Activated CD4-positive, alpha-beta T cell treated with anti-CD3 and anti-CD28 coated beads for 36 hours (primary cell): ENCODE measurements at regions of chr1 and their contacts with region 1.

Region 1: GRCh38 chr1:42462828-42463763 is at the start of gene CCDC30:
- DNase-seq: peak; percentile 97
- ATAC-seq: peak; percentile 100
- H3K4me3 Mint-ChIP-seq: peak within 1 kb of the TSS; percentile 77
- H3K27ac Mint-ChIP-seq: peak within 1 kb of the TSS; percentile 73
- H3K4me1 Mint-ChIP-seq: peaks cover 31% of the 10 kb centered on the region
- H3K27me3 Mint-ChIP-seq: no peaks in the 10 kb centered on the region
- total RNA-seq, gene CCDC30: 1.3 to 2.3 TPM

Region 2: DNA sequence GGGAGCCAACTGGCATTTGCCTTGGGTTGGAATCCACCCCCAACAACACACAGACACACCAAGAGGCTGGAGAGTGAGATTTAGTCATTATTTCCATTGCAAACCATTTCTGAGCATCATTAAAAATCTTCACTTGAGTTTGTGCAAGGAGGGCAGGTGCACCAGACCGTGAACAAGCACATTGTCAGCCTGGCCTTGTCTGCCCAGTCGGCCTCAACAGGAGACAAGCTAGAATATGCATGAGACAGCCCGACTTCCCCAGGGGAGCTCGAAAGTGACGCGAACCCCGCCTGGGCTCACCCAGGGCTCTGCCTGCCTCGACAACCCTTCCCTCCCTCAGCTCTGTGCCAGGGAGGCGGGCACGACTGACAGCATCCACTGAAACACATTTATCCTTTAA is 325.3 kb before region 1 on chr1:
- CTCF ChIA-PET with region 1: no interaction called
- POLR2A ChIA-PET with region 1: no interaction called
- intact Hi-C with region 1: no loop called
- DNase-seq: no peak
- ATAC-seq: no peak
- H3K4me3 Mint-ChIP-seq: no peak overlapping the region
- H3K27ac Mint-ChIP-seq: no peak overlapping the region
- H3K4me1 Mint-ChIP-seq: no peaks in the 10 kb centered on the region
- H3K27me3 Mint-ChIP-seq: peaks cover 4% of the 10 kb centered on the region

Region 3: GRCh38 chr1:42657971-42658879 is 195.1 kb after region 1 on chr1 and contains the start of gene PPIH:
- CTCF ChIA-PET with region 1: no interaction called
- POLR2A ChIA-PET with region 1: no interaction called
- intact Hi-C with region 1: loop called (anchors 1 kb)
- DNase-seq: peak; percentile 98
- ATAC-seq: peak; percentile 97
- H3K4me3 Mint-ChIP-seq: peak within 1 kb of the TSS; percentile 97
- H3K27ac Mint-ChIP-seq: peak within 1 kb of the TSS; percentile 97
- H3K4me1 Mint-ChIP-seq: peaks cover 39% of the 10 kb centered on the region
- H3K27me3 Mint-ChIP-seq: no peaks in the 10 kb centered on the region
- total RNA-seq, gene PPIH: 111 to 114 TPM

Region 4: DNA sequence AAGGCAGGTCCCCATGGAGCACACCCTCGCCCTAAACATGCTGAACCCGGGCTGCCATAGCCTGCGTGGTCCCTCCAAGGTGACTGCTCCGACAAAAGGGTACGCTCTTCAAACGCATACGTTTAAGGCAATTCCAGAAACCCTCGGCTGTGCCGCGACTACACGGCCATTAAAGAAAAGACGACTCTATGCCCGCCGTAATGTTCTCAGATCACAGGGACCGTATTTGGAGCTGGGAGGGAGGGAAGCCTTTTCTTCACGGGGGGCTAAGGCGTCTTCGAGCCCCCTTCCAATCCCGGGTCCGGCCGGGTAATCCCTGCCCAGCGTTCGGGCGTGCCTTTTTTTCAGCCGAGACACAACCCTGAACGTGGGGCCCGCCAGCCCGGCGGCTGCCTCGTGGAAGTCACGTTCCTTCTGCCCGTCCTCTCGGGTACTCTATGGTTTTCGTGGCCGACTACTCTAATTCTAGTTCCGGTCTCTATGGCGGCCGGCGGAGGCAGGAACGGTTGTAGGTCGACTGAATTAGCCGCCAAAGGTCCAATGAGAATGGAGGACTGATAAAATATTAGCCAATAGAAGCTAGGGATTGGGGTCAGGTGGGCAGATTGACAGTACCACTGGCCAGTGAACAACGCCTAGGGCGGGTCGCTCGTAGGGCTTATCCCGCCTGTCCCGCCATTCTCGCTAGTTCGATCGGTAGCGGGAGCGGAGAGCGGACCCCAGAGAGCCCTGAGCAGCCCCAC is 218.8 kb after region 1 on chr1 and contains the start of gene YBX1:
- CTCF ChIA-PET with region 1: no interaction called
- POLR2A ChIA-PET with region 1: no interaction called
- intact Hi-C with region 1: loop called in 1 of 2 experiments (anchors 1 kb)
- DNase-seq: peak; percentile 96
- ATAC-seq: peak; percentile 97
- H3K4me3 Mint-ChIP-seq: peak within 1 kb of the TSS; percentile 93
- H3K27ac Mint-ChIP-seq: peak within 1 kb of the TSS; percentile 97
- H3K4me1 Mint-ChIP-seq: peaks cover 41% of the 10 kb centered on the region
- H3K27me3 Mint-ChIP-seq: no peaks in the 10 kb centered on the region
- total RNA-seq, gene YBX1: 1,224 to 1,435 TPM